Astrocyte of the cerebellum (primary cell): ENCODE measurements at regions of chr1 and their contacts with region 1.

Region 1: DNA sequence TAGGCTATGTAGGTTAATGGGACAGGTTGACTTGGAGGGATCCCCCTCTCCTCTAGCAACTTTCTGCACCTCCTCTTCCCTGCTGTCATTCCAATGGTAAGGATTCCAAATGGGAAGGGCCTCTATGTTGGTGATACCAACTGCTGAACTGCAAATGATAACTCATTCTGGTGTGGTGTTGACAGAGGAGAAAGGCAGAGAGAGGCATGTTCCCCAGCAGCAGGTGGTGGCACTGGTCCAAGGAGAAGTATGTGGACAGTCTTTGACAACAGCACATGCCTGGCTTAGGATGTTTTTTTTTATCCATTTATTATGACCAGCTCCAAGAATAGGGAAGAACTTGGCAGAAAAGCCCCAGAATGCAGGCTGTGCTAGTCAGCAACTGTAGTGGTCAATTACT is 19.6 kb upstream of the SPAG17 start:
- DNase-seq: no peak
- H3K4me3 ChIP-seq: no peak overlapping the region
- CTCF ChIP-seq: no peak

Region 2: GRCh38 chr1:118132000-118132399 is 72.6 kb before region 1 on chr1:
- in situ Hi-C with region 1: no loop called
- DNase-seq: no peak
- H3K4me3 ChIP-seq: no peak overlapping the region
- CTCF ChIP-seq: no peak

Region 3: DNA sequence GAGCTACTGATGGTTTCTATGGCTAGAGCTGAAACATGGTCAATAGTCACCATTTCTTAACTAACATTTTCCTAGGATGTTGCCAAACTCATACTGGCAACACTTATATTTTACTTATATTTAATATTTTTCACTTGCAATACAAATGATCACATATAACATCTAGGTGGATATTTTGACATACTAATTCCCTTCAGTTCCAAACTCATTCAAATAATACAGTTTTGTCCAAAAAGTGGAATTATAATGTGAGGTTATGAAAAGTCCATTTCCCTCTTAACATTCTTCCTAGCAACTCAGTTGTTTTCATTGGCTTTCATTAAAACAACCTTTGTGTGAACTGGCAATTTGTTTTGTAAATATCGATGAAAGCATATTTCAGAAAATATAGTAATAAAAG is 35.6 kb before region 1 on chr1:
- in situ Hi-C with region 1: loop called (anchors 5 kb)
- DNase-seq: no peak
- H3K4me3 ChIP-seq: no peak overlapping the region
- CTCF ChIP-seq: no peak